ENCODE measurements at regions of chr2 and their contacts with region 1.

Region 1: GRCh38 chr2:20642055-20642971 is 8.6 kb downstream of the HS1BP3 start:
- DNase-seq: peak; percentile 74
- H3K4me3 ChIP-seq: no peak overlapping the region
- H3K27ac ChIP-seq: peak overlapping the region; percentile 38
- H3K27me3 ChIP-seq: no peaks in the 10 kb centered on the region
- CTCF ChIP-seq: peak; percentile 97

Region 2: GRCh38 chr2:20411361-20411894 is 230.9 kb before region 1 on chr2:
- in situ Hi-C with region 1: loop called (anchors 25 kb)
- DNase-seq: peak; percentile 84
- H3K4me3 ChIP-seq: no peak overlapping the region
- H3K27ac ChIP-seq: no peak overlapping the region
- H3K27me3 ChIP-seq: no peaks in the 10 kb centered on the region
- CTCF ChIP-seq: peak; percentile 95

Measured in brain microvascular endothelial cell (primary cell).